Activated T-helper 2 cell treated with anti-CD3 and anti-CD28 coated beads, Interferon-gamma antibody, Interleukin-2, Interleukin-4, amounts not matched to agents 10 μg/mL and 5 μg/mL and 100 μg/mL, durations not matched to agents 14 hours and 24 hours and 36 hours (primary cell): ENCODE measurements at regions of chr11 and their contacts with region 1.

Region 1: DNA sequence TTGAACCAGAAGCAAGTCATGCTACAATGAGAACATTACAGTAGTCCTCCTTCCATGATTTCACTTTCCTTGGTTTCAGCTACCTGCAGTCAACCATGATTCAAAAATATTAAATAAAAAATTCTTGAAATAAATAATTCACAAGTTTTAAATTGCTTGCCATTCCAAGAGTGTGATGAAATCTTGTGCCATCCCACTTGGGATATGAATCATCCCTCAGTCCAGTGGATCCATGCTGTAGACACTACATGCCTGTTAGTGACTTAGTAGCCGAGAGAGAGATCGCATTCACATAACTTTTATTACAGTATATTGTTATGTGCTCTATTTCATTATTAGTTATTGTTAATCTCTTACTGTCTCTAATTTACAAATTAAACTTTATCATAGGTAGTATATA is 6.0 kb downstream of the HOATZ start:
- DNase-seq: no peak
- H3K4me3 Mint-ChIP-seq: no peak overlapping the region
- H3K27ac Mint-ChIP-seq: no peak overlapping the region
- H3K4me1 Mint-ChIP-seq: peaks cover 27% of the 10 kb centered on the region
- H3K27me3 Mint-ChIP-seq: peaks cover 1% of the 10 kb centered on the region

Region 2: GRCh38 chr11:111097191-111097590 is 423.4 kb before region 1 on chr11:
- intact Hi-C with region 1: no loop called
- DNase-seq: no peak
- H3K4me3 Mint-ChIP-seq: no peak overlapping the region
- H3K27ac Mint-ChIP-seq: no peak overlapping the region
- H3K4me1 Mint-ChIP-seq: peaks cover 3% of the 10 kb centered on the region
- H3K27me3 Mint-ChIP-seq: peaks cover 19% of the 10 kb centered on the region

Region 3: GRCh38 chr11:111500481-111500880 is 20.1 kb before region 1 on chr11:
- intact Hi-C with region 1: no loop called
- DNase-seq: no peak
- H3K4me3 Mint-ChIP-seq: no peak overlapping the region
- H3K27ac Mint-ChIP-seq: no peak overlapping the region
- H3K4me1 Mint-ChIP-seq: no peaks in the 10 kb centered on the region
- H3K27me3 Mint-ChIP-seq: peaks cover 57% of the 10 kb centered on the region

Region 4: GRCh38 chr11:111531687-111532364 is 11.3 kb after region 1 on chr11:
- intact Hi-C with region 1: loop called (anchors 1 kb)
- DNase-seq: no peak
- H3K4me3 Mint-ChIP-seq: no peak overlapping the region
- H3K27ac Mint-ChIP-seq: peak overlapping the region; percentile 71
- H3K4me1 Mint-ChIP-seq: peaks cover 31% of the 10 kb centered on the region
- H3K27me3 Mint-ChIP-seq: peaks cover 23% of the 10 kb centered on the region